CD8-positive, alpha-beta T cell (primary cell): ENCODE measurements at regions of chr17 and their contacts with region 1.

Region 1: DNA sequence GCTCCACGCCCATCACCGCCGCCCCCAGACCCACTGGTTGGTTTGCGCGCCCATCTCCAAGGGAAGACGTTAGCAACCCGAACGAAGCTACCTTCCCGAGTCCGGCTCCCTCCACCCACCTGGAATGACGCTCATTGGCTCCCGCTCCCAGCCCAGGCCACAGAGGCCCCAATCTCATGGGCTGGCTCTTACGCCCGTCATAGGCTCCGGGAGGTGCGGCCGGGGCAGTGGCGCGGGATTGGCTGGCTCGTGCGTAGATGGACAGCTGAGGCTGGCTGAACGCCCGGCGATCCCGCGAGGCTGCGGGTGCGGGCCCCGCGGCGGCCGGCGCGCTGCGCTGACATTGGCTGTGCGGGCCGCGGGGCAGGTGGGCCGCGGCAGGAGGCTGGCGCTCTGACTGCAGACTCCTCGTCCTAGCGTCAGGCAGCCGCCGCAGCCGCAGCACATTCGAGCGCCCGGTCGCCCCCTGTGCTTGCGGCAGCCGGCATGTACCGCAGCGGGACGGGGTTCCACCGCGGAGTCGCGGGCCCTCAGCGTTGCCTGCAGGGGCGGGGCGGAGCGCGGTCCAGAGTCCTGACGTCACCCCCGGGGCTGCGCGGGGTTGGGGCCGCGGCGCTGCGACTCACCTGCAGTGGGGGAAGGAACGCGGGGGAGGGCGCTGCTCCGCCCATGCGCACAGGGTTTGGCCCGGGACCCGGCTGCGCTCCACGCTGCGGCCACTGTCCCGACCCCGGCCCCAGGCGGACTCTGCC is 453 bp upstream of the MYH10 start:
- DNase-seq: peak; percentile 50 to 93 (median 81)
- ATAC-seq: peak; percentile 87
- H3K4me3 ChIP-seq: peak overlapping the region; percentile 71 to 89
- H3K4me3 Mint-ChIP-seq: peak overlapping the region; percentile 98
- H3K27ac ChIP-seq: peak overlapping the region in 1 of 2 experiments; percentile 26
- H3K27ac Mint-ChIP-seq: peak overlapping the region; percentile 72
- H3K4me1 ChIP-seq: peaks cover 5% of the 10 kb centered on the region
- H3K4me1 Mint-ChIP-seq: peaks cover 15% of the 10 kb centered on the region
- H3K27me3 ChIP-seq: peaks cover 8 to 16% of the 10 kb centered on the region in 2 experiments
- H3K27me3 Mint-ChIP-seq: peaks cover 35% of the 10 kb centered on the region
- CTCF ChIP-seq: no peak

Region 2: GRCh38 chr17:8393420-8394241 is 237.3 kb before region 1 on chr17:
- CTCF ChIA-PET with region 1: no interaction called
- POLR2A ChIA-PET with region 1: no interaction called
- intact Hi-C with region 1: loop called in 1 of 2 experiments (anchors 10 kb)
- DNase-seq: peak in 8 of 9 experiments; percentile 15 to 89 (median 55)
- ATAC-seq: peak; percentile 99
- H3K4me3 ChIP-seq: no peak overlapping the region
- H3K4me3 Mint-ChIP-seq: peak overlapping the region; percentile 43
- H3K27ac ChIP-seq: peak overlapping the region; percentile 35 to 75
- H3K27ac Mint-ChIP-seq: peak overlapping the region; percentile 94
- H3K4me1 ChIP-seq: peaks cover 14% of the 10 kb centered on the region
- H3K4me1 Mint-ChIP-seq: peaks cover 15% of the 10 kb centered on the region
- H3K27me3 ChIP-seq: peaks cover 0 to 3% of the 10 kb centered on the region in 2 experiments
- H3K27me3 Mint-ChIP-seq: peaks cover 6% of the 10 kb centered on the region
- CTCF ChIP-seq: no peak

Region 3: DNA sequence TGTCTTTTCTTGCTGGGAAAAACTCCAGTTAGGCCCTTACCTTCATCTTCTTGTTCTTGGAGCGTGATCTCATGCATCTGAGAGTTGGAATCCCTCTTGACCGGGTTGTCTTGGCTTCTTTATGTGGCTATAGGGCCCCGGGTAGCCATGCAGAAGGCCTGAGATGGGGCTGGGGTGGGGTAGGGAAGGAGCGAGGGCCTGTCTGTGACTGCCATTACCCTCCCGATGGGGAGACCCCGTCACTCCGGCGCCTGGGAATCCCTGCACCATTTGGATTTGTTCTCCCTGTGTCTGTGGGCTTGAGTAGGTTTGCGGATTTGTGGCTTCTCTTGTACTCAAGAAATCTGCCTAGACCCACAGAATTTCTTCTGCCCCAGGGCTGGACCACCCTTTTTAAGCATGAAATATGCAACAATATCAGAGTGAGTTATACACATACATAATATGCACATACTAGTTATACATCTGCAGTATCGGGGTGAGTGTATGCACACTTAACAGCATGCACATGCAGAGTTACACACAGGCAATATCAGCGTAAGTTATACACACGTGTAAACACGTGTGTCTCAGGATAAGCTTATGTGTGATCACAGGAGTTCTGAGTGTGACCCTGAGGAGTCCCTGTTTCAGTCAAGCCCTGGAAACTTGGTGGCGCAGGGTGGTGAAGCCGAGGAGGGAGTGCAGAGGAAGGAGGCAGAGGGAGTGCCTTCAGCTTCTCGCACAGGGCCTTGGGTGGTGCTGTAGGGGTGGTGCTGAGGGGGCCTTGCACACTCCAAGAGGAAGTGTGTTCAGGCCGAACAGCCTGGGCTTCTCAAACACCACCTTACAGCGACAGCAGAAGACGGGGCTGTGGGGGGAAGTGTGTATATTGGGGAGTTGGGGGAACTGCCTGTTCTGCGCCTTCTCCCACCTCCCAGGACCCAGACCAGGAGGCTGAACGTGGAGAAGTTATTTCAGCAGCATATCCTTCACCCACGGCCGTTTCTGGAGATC is 95.2 kb after region 1 on chr17:
- CTCF ChIA-PET with region 1: no interaction called
- POLR2A ChIA-PET with region 1: no interaction called
- intact Hi-C with region 1: no loop called
- DNase-seq: no peak
- ATAC-seq: no peak
- H3K4me3 ChIP-seq: no peak overlapping the region
- H3K4me3 Mint-ChIP-seq: no peak overlapping the region
- H3K27ac ChIP-seq: no peak overlapping the region
- H3K27ac Mint-ChIP-seq: no peak overlapping the region
- H3K4me1 ChIP-seq: no peaks in the 10 kb centered on the region
- H3K4me1 Mint-ChIP-seq: no peaks in the 10 kb centered on the region
- H3K27me3 ChIP-seq: no peaks in the 10 kb centered on the region
- H3K27me3 Mint-ChIP-seq: peaks cover 8% of the 10 kb centered on the region
- CTCF ChIP-seq: no peak